ENCODE measurements at regions of chr18 and their contacts with region 1.

Region 1: DNA sequence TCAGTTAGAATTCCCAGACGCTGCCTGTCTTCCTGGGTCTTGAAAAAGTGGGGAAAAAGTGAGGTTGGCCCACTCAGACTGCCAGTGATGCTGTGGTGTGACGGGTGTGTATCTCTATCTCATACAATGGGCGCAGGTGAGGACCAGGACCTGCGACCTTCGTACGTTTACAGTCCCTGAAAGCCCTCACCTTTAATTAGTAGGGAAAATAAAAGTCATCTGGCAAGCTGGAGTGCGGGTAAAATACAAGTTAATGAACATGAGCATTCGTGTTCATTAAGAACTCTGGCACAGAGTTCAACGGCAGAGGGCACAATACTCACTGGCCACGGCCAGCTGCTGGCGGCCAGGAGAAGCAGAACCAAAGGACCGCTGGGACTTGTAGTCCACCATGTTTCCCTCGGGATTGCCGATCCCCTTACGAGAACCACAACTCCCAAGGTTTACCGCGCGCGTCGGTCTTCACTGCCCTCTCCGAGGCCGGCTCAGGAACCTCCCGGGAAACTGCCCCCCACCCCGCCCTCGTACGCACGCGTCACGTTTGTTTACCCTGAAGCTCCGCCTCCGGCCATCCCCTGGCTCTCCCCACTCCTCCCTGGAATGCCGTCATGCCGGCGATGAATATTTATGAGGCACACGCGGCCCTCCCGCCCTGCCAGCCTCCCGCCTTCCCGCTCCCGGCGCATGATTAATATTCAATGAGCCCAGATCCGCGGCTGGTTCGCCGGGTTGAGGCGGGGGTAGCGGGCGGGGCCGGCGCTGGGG is 488 bp upstream of the PHLPP1 start:
- DNase-seq: peak; percentile 66 to 95 (median 80)
- ATAC-seq: peak; percentile 72 to 81 (median 75)
- H3K4me3 ChIP-seq: peak overlapping the region; percentile 69 to 88
- H3K4me3 Mint-ChIP-seq: peak overlapping the region; percentile 88 to 92 (median 89)
- H3K27ac ChIP-seq: peak overlapping the region; percentile 74
- H3K27ac Mint-ChIP-seq: peak overlapping the region; percentile 95 to 96
- H3K4me1 ChIP-seq: peaks cover 3 to 19% of the 10 kb centered on the region in 2 experiments
- H3K4me1 Mint-ChIP-seq: peaks cover 33 to 36% (median 36%) of the 10 kb centered on the region in 3 donors
- H3K27me3 ChIP-seq: no peaks in the 10 kb centered on the region
- H3K27me3 Mint-ChIP-seq: no peaks in the 10 kb centered on the region

Region 2: GRCh38 chr18:62690236-62690815 is 24.5 kb before region 1 on chr18:
- CTCF ChIA-PET with region 1: interaction called, 3 to 10 read pairs
- POLR2A ChIA-PET with region 1: no interaction called
- DNase-seq: no peak
- ATAC-seq: no peak
- H3K4me3 ChIP-seq: no peak overlapping the region
- H3K4me3 Mint-ChIP-seq: no peak overlapping the region
- H3K27ac ChIP-seq: no peak overlapping the region
- H3K27ac Mint-ChIP-seq: no peak overlapping the region
- H3K4me1 ChIP-seq: no peaks in the 10 kb centered on the region
- H3K4me1 Mint-ChIP-seq: no peaks in the 10 kb centered on the region
- H3K27me3 ChIP-seq: peaks cover 0 to 15% of the 10 kb centered on the region in 2 experiments
- H3K27me3 Mint-ChIP-seq: peaks cover 0 to 3% of the 10 kb centered on the region in 2 donors

Region 3: DNA sequence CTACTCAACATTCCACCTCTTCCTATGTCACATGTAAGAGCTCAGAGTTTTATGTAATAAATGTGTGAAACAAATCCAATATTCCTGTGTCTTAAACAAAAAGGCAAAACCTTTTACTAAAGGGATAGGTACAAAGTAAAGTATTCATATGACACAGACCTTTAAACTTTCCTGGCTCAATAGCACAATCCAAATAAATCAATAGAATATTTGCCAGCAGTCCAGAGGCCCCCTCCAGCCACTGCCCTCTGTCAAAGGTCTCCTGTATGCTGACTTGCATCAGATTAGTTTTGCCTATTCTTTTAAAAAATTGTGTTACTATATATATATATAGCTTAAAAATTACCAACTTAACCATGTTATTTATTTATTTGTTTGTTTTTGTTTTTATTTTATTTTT is 17.2 kb before region 1 on chr18:
- CTCF ChIA-PET with region 1: interaction called, 10 read pairs
- POLR2A ChIA-PET with region 1: no interaction called
- DNase-seq: no peak
- ATAC-seq: no peak
- H3K4me3 ChIP-seq: no peak overlapping the region
- H3K4me3 Mint-ChIP-seq: no peak overlapping the region
- H3K27ac ChIP-seq: no peak overlapping the region
- H3K27ac Mint-ChIP-seq: no peak overlapping the region
- H3K4me1 ChIP-seq: no peaks in the 10 kb centered on the region
- H3K4me1 Mint-ChIP-seq: no peaks in the 10 kb centered on the region
- H3K27me3 ChIP-seq: peaks cover 0 to 6% of the 10 kb centered on the region in 2 experiments
- H3K27me3 Mint-ChIP-seq: peaks cover 8 to 13% of the 10 kb centered on the region in 2 donors

Region 4: DNA sequence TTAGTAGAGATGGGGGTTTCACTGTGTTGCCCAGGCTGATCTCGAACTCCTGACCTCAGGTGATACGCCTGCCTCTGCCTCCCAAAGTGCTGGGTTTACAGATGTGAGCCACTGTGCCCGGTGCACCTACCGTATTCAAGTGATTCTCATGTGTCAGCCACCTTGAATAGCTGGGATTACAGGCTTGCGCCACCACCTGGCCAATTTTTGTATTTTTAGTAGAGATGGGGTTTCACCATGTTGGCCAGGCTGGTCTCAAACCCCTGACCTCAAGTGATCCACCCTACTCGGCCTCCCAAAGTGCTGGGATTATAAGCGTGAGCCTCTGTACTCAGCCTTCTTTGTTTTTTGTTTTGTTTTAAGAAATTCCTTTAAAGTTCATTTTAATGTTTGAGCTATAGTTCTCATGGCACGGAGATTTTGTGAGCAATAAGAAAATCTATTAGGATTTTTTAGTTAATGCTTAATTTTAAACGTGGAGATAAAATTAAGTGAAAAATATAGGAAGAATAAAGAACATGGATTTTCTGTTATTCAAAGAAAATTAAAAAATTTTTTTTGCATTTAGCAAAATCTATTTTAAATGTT is 243.1 kb after region 1 on chr18:
- CTCF ChIA-PET with region 1: interaction called, 4 to 15 read pairs
- POLR2A ChIA-PET with region 1: no interaction called
- DNase-seq: peak in 19 of 35 experiments; percentile 8 to 52 (median 19)
- ATAC-seq: peak in 1 of 4 experiments; percentile 57
- H3K4me3 ChIP-seq: no peak overlapping the region
- H3K4me3 Mint-ChIP-seq: no peak overlapping the region
- H3K27ac ChIP-seq: no peak overlapping the region
- H3K27ac Mint-ChIP-seq: no peak overlapping the region
- H3K4me1 ChIP-seq: peaks cover 3 to 20% of the 10 kb centered on the region in 2 experiments
- H3K4me1 Mint-ChIP-seq: peaks cover 8 to 19% (median 12%) of the 10 kb centered on the region in 3 donors
- H3K27me3 ChIP-seq: no peaks in the 10 kb centered on the region
- H3K27me3 Mint-ChIP-seq: no peaks in the 10 kb centered on the region

Region 5: DNA sequence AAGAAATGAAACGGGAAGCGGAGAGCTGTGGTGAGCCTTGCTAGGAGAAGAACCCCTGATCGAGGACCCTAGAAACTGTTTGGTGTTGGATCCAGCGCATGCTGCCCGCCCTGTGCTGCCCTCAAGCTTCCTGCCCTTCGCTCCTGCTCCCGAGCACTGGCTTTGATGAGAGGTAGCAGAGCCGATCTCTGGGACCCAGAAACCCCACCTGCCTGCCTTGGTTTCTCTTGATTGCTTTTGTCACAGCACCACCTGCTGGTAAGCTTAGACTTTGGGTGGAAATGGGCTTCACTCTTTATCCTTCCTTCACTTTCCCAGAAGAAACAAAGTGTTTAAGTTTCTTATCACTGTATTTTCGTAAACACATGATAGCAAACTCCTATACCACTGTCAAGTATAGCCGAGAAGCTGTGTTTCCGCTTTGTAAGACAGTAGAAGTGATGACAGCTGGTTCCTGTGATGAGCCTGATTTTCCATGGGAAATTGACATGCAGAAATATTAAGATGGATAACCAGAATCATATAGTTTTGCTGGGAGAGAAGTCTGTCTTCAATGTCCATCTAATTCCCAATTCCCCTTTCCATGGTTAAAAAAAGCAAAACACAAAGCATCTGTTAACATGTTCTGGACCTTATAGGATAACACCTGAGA is 267.9 kb after region 1 on chr18:
- CTCF ChIA-PET with region 1: interaction called, 4 to 26 read pairs
- POLR2A ChIA-PET with region 1: no interaction called
- DNase-seq: peak in 33 of 35 experiments; percentile 9 to 77 (median 39)
- ATAC-seq: peak; percentile 58 to 71 (median 68)
- H3K4me3 ChIP-seq: no peak overlapping the region
- H3K4me3 Mint-ChIP-seq: peak overlapping the region in 2 of 3 donors; percentile 0 to 28
- H3K27ac ChIP-seq: no peak overlapping the region
- H3K27ac Mint-ChIP-seq: no peak overlapping the region
- H3K4me1 ChIP-seq: peaks cover 0 to 4% of the 10 kb centered on the region in 2 experiments
- H3K4me1 Mint-ChIP-seq: peaks cover 5 to 8% (median 6%) of the 10 kb centered on the region in 3 donors
- H3K27me3 ChIP-seq: no peaks in the 10 kb centered on the region
- H3K27me3 Mint-ChIP-seq: no peaks in the 10 kb centered on the region